ENCODE measurements at regions of chr15 and their contacts with region 1.

Region 1: DNA sequence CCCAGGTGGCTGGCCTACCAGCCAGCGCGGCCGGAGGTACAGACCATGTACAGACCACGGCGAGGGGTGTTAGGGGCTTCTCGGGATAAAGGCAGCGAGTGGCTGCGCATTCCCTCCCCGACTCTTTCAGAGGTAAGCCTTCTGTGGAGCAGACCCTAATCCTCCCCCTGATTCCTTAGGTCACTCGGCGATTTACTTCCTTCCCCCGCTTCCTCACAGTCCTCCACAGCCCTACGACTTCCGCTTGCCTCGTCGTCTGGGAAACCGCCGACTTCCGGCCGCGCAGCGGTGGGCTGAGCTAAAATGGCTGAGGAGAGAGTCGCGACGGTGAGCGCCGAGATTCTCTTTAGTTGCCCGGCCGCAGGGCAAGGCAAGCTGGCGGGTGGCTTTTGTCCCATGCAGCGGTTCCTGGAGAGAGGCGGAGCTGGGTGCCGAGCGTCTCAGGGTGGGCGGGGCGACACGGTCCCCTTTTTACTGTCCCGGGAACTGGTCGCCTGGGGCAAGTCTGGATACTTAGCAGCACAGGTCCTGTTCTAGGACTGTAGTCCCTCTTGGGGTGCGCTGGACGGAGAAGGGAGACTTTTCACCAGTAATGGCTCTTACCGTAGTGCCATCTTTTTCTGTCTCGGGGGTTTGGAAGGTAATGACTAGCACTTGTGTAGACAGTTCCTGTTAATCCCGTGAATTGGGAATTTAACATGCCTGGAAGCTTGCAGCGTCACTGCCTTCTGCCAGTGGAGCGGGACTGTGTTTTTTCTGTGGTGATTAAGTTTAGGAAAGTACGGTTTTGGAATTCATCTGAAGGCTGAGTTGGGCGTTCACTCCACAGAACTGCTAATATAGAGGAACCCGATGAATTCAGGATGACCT is at the starts of genes BBS4 and HIGD2B:
- DNase-seq: peak; percentile 63 to 90 (median 83)
- H3K4me3 ChIP-seq: peak within 1 kb of the TSS; percentile 55 to 97 (median 84)
- H3K27ac ChIP-seq: peak within 1 kb of the TSS; percentile 1 to 97 (median 86)
- H3K27me3 ChIP-seq: no peaks in the 10 kb centered on the region
- CTCF ChIP-seq: peak in 19 of 56 donors; percentile 4 to 42 (median 21)
- total RNA-seq, gene BBS4: 16.4 to 42.8 (median 27.6) TPM
- total RNA-seq, gene HIGD2B: 0.40 to 0.84 (median 0.54) TPM in 8 of 120 experiments, not detected in the others

Region 2: GRCh38 chr15:72616491-72617210 is 69.5 kb before region 1 on chr15:
- intact Hi-C with region 1: loop called in 1 of 2 experiments (anchors 10 kb)
- DNase-seq: no peak
- H3K4me3 ChIP-seq: no peak overlapping the region
- H3K27ac ChIP-seq: no peak overlapping the region
- H3K27me3 ChIP-seq: no peaks in the 10 kb centered on the region
- CTCF ChIP-seq: no peak

Region 3: DNA sequence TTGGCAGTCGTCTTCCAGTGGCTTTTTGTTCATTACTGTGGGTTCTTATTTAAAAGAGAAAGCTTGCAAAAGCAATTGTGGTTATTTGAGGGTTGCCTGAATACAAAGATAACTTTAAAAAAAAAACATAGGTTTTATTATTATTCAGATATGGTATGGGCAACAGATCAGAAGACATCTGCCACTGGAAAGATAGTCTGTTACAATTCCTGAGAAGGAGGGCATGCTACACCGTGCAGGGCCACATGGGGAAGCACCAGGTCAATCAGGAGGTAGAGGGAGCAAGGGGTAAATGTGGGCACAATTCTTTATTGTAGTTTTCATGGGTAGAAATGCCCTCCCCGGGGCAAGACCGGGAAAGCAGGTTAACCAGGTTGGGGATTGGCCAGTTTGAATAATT is 46.4 kb after region 1 on chr15:
- intact Hi-C with region 1: no loop called
- DNase-seq: no peak
- H3K4me3 ChIP-seq: no peak overlapping the region
- H3K27ac ChIP-seq: no peak overlapping the region
- H3K27me3 ChIP-seq: no peaks in the 10 kb centered on the region
- CTCF ChIP-seq: no peak

Measured in dorsolateral prefrontal cortex (tissue), 120 donors.